ENCODE measurements at regions of chr6 and their contacts with region 1.

Region 1: GRCh38 chr6:153023977-153024708 is 21.6 kb upstream of the MTRF1L start:
- DNase-seq: peak; percentile 61
- H3K4me3 Mint-ChIP-seq: no peak overlapping the region
- H3K27ac Mint-ChIP-seq: no peak overlapping the region
- H3K4me1 Mint-ChIP-seq: peaks cover 1% of the 10 kb centered on the region
- H3K27me3 Mint-ChIP-seq: peaks cover 3% of the 10 kb centered on the region

Region 2: GRCh38 chr6:152552616-152553209 is 471.4 kb before region 1 on chr6:
- CTCF ChIA-PET with region 1: no interaction called
- intact Hi-C with region 1: loop called (anchors 2 kb)
- DNase-seq: peak; percentile 37
- H3K4me3 Mint-ChIP-seq: no peak overlapping the region
- H3K27ac Mint-ChIP-seq: no peak overlapping the region
- H3K4me1 Mint-ChIP-seq: no peaks in the 10 kb centered on the region
- H3K27me3 Mint-ChIP-seq: peaks cover 22% of the 10 kb centered on the region

Region 3: DNA sequence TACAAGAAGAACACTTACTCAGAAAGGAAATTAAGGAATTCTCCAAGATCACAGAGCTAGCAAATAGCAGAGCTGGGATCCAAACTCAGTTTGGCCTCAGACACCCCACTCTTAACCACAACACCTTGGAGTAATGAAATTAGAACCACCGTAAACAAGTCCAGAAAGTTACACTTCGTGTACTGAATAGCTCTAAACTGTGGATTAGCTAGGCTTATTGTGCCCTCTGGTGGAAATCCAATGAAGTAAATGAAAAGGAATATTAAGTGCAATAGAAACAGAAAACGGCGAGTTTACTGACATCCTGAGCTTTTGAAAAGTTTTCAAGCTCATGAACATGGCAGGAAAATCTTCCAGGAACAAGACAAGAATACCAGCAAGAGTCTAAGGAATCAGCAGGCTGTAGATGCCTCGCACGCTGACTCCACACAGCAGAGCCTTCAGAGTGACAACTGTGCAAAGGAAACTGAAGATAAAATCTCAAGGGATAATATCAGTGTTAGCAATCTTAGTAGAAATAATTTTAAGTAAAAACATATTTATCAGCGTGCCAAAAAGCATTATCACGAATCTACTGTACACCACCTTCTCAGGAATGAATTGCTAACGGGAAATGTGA is 75.9 kb before region 1 on chr6:
- CTCF ChIA-PET with region 1: interaction called, 15 read pairs
- intact Hi-C with region 1: no loop called
- DNase-seq: no peak
- H3K4me3 Mint-ChIP-seq: no peak overlapping the region
- H3K27ac Mint-ChIP-seq: no peak overlapping the region
- H3K4me1 Mint-ChIP-seq: peaks cover 6% of the 10 kb centered on the region
- H3K27me3 Mint-ChIP-seq: peaks cover 10% of the 10 kb centered on the region

Region 4: DNA sequence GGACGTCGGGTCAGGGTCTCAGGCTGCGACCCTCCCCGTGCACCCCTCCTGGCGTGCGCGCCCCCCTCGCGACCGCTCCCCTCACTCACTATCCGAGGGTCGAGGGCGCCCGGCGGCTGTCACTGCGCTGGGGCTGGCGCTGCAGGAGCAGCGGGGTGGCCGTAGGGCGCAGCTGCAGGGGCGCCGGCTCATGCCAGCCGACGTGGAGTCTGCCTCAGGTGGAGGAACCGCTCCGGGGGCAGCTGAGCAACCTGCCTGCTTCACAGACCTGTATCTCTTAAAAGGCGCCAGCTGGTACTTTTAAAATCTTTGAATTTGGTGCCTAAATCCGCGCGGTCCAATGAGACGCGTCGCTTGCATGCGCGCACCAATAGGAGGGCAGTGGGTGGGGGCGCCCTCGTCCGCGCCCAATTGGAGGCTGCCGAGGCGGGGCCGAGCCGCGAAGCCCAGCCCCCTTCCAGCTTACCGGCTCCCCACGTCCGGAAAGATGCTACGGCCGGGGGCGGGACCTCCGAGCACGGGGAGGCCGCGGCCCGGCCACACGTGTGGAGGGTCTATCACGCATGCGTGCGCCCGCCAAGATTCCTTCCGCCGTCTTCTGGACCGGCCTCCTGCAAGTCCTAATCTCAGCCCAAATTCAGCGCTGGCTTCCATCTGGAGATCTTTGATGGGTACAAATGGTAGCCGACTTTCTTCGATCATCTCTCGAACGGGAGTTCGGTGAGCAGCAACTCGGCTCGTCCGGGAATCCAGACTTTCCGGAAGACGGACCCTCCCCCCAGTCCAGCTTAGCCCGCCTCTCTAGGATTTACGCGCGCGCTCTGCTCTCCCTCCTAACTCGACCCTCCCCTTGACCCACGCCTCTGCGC is 41.1 kb before region 1 on chr6 and contains the start of gene FBXO5:
- CTCF ChIA-PET with region 1: interaction called, 3 read pairs
- intact Hi-C with region 1: loop called (anchors 2 kb)
- DNase-seq: peak; percentile 97
- H3K4me3 Mint-ChIP-seq: peak within 1 kb of the TSS; percentile 99
- H3K27ac Mint-ChIP-seq: peak within 1 kb of the TSS; percentile 100
- H3K4me1 Mint-ChIP-seq: peaks cover 44% of the 10 kb centered on the region
- H3K27me3 Mint-ChIP-seq: no peaks in the 10 kb centered on the region
- total RNA-seq, gene FBXO5: 61.4 to 62.3 TPM